PC-9 (cell line): ENCODE measurements at regions of chr3 and their contacts with region 1.

Region 1: GRCh38 chr3:45593708-45594609 is 592 bp upstream of the LIMD1 start:
- DNase-seq: peak; percentile 51 to 84
- H3K4me3 ChIP-seq: peak overlapping the region; percentile 64
- H3K27ac ChIP-seq: peak overlapping the region; percentile 41; the same call in 1 of the 2 replicates
- H3K4me1 ChIP-seq: peaks cover 39% of the 10 kb centered on the region
- H3K27me3 ChIP-seq: no peaks in the 10 kb centered on the region
- CTCF ChIP-seq: no peak

Region 2: GRCh38 chr3:45507820-45508317 is 86.1 kb before region 1 on chr3:
- CTCF ChIA-PET with region 1: interaction called, 3 read pairs
- POLR2A ChIA-PET with region 1: no interaction called
- intact Hi-C with region 1: loop called (anchors 5 kb)
- DNase-seq: no peak
- H3K4me3 ChIP-seq: no peak overlapping the region
- H3K27ac ChIP-seq: no peak overlapping the region
- H3K4me1 ChIP-seq: no peaks in the 10 kb centered on the region
- H3K27me3 ChIP-seq: no peaks in the 10 kb centered on the region
- CTCF ChIP-seq: no peak

Region 3: DNA sequence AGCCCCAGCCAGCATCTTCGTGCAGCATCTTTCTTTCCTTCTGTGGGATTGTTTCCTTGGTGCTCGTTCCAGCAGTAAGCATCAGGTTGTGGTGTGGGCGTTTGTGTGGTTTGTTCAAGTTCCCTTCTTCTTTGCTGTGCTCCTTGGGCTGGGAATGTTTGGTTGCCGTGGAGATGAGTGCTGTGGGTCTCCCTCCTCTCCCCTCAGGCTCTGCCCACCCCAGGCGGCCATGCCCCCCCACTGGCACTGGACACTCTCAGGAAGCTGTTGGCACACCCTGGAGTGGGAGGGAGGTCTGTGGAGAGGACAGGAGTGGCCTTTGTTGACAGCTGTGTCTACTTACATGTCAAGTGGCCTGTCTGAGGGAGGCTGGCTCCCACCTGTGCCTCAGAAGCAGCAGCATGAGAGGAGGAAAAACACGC is 48.8 kb after region 1 on chr3:
- CTCF ChIA-PET with region 1: no interaction called
- POLR2A ChIA-PET with region 1: no interaction called
- intact Hi-C with region 1: no loop called
- DNase-seq: peak in 1 of 2 experiments; percentile 34
- H3K4me3 ChIP-seq: no peak overlapping the region
- H3K27ac ChIP-seq: peak overlapping the region; percentile 99
- H3K4me1 ChIP-seq: peaks cover 95% of the 10 kb centered on the region
- H3K27me3 ChIP-seq: no peaks in the 10 kb centered on the region
- CTCF ChIP-seq: no peak

Region 4: GRCh38 chr3:46110701-46111493 is 516.9 kb after region 1 on chr3:
- CTCF ChIA-PET with region 1: no interaction called
- POLR2A ChIA-PET with region 1: no interaction called
- intact Hi-C with region 1: no loop called
- DNase-seq: peak; percentile 72 to 98
- H3K4me3 ChIP-seq: peak overlapping the region; percentile 41; the same call in 1 of the 2 replicates
- H3K27ac ChIP-seq: peak overlapping the region; percentile 98
- H3K4me1 ChIP-seq: peaks cover 76% of the 10 kb centered on the region
- H3K27me3 ChIP-seq: no peaks in the 10 kb centered on the region
- CTCF ChIP-seq: no peak